ENCODE measurements at regions of chr1 and their contacts with region 1.

Region 1: DNA sequence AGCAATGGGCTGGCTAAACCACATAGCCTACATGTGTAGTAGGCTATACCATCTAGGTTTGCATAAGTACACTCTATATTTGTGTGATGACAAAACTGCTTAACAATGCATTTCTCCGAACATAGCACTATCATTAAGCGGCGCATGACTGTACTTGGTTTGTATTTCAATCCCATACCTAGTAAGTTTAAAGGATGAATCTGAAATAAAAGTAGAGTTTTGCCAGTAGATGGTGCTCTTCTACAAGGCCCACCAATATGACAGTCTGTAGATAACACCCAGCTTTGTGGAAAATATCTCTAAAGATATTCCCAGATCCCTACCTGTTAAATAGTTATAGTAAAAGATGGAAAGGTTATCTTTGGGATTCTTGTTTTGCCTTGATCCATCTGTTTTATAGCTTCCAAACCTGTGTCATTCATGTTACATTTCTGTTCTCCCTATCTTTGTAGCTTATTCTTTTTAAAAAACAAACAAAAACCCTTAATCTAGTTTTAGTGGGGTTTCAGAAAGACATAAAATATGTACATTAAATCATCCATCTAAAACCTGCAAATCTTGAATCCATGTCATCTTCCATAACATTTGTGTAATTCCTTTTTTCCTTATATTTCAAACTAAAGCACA is 33.9 kb upstream of the ASPM start:
- DNase-seq: peak in 1 of 35 experiments; percentile 57
- ATAC-seq: peak; percentile 37 to 62 (median 46)
- H3K4me3 ChIP-seq: no peak overlapping the region
- H3K4me3 Mint-ChIP-seq: no peak overlapping the region
- H3K27ac ChIP-seq: no peak overlapping the region
- H3K27ac Mint-ChIP-seq: no peak overlapping the region
- H3K4me1 ChIP-seq: no peaks in the 10 kb centered on the region
- H3K4me1 Mint-ChIP-seq: peaks cover 8 to 14% (median 11%) of the 10 kb centered on the region in 3 donors
- H3K27me3 ChIP-seq: no peaks in the 10 kb centered on the region
- H3K27me3 Mint-ChIP-seq: no peaks in the 10 kb centered on the region

Region 2: DNA sequence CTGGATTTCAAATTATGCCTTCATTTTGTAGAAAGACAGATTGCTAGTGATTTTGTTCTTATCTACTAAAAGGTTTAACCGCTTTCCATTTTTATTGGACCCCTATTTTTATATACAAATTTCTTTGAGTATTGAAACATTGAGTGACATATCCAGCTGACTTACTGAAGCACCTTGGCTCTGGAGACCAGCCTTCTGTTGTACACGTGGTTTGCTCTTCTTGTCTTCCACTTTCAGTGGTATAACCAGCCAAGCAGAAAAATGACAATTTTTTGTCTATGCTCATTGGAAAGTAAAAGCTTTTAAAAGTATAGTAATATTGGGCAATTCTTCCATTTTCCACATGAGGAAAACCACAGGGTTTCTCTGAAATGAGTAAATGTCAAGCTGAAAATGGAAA is 117.7 kb before region 1 on chr1:
- CTCF ChIA-PET with region 1: no interaction called
- POLR2A ChIA-PET with region 1: no interaction called
- DNase-seq: no peak
- ATAC-seq: no peak
- H3K4me3 ChIP-seq: no peak overlapping the region
- H3K4me3 Mint-ChIP-seq: no peak overlapping the region
- H3K27ac ChIP-seq: no peak overlapping the region
- H3K27ac Mint-ChIP-seq: no peak overlapping the region
- H3K4me1 ChIP-seq: no peaks in the 10 kb centered on the region
- H3K4me1 Mint-ChIP-seq: no peaks in the 10 kb centered on the region
- H3K27me3 ChIP-seq: peaks cover 0 to 7% of the 10 kb centered on the region in 2 experiments
- H3K27me3 Mint-ChIP-seq: peaks cover 2 to 8% of the 10 kb centered on the region in 2 donors

Region 3: DNA sequence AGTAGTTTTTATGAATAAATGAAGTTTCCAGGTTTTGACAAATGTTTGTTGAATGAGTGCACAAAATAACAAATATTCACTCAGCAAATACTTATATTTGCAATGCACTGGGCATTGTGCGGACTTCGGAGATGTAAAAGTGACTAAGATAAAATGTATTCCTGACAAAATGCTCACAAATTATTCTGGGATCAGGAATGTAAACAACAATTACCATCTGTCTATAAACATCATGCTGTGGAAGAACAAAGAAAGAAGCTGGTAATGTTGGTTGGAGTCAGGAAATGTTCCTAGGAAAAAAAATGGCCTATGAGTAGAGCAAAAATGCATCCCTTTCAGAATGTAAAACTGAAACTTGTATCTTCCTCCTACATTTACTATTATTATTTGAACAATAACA is 156.2 kb after region 1 on chr1:
- CTCF ChIA-PET with region 1: interaction called in 1 of 2 experiments, 11 read pairs
- POLR2A ChIA-PET with region 1: no interaction called
- DNase-seq: no peak
- ATAC-seq: no peak
- H3K4me3 ChIP-seq: no peak overlapping the region
- H3K4me3 Mint-ChIP-seq: no peak overlapping the region
- H3K27ac ChIP-seq: no peak overlapping the region
- H3K27ac Mint-ChIP-seq: no peak overlapping the region
- H3K4me1 ChIP-seq: no peaks in the 10 kb centered on the region
- H3K4me1 Mint-ChIP-seq: peaks cover 0 to 3% (median 3%) of the 10 kb centered on the region in 3 donors
- H3K27me3 ChIP-seq: peaks cover 0 to 6% of the 10 kb centered on the region in 2 experiments
- H3K27me3 Mint-ChIP-seq: no peaks in the 10 kb centered on the region

Region 4: GRCh38 chr1:197356723-197357533 is 176.6 kb after region 1 on chr1:
- CTCF ChIA-PET with region 1: interaction called, 20 to 25 read pairs
- POLR2A ChIA-PET with region 1: no interaction called
- DNase-seq: peak in 13 of 35 experiments; percentile 2 to 56 (median 5)
- ATAC-seq: peak in 1 of 4 experiments; percentile 57
- H3K4me3 ChIP-seq: no peak overlapping the region
- H3K4me3 Mint-ChIP-seq: no peak overlapping the region
- H3K27ac ChIP-seq: no peak overlapping the region
- H3K27ac Mint-ChIP-seq: no peak overlapping the region
- H3K4me1 ChIP-seq: no peaks in the 10 kb centered on the region
- H3K4me1 Mint-ChIP-seq: peaks cover 0 to 5% (median 0%) of the 10 kb centered on the region in 3 donors
- H3K27me3 ChIP-seq: no peaks in the 10 kb centered on the region
- H3K27me3 Mint-ChIP-seq: no peaks in the 10 kb centered on the region

Measured in T-cell (primary cell).